Activated T-helper 1 cell treated with anti-CD3 and anti-CD28 coated beads, Interleukin-12 subunit alpha, Interleukin-12 subunit beta, Interleukin-2, Interleukin-4 antibody, amounts not matched to agents 30 ng/mL and 10 ng/mL and 1 ng/mL, durations not matched to agents 14 hours and 24 hours and 36 hours (primary cell): ENCODE measurements at regions of chr3 and their contacts with region 1.

Region 1: GRCh38 chr3:12275974-12276650 is 12.8 kb upstream of the PPARG start:
- DNase-seq: no peak
- H3K4me3 Mint-ChIP-seq: no peak overlapping the region
- H3K27ac Mint-ChIP-seq: no peak overlapping the region
- H3K4me1 Mint-ChIP-seq: no peaks in the 10 kb centered on the region
- H3K27me3 Mint-ChIP-seq: peaks cover 28% of the 10 kb centered on the region

Region 2: GRCh38 chr3:12235691-12236090 is 40.4 kb before region 1 on chr3:
- intact Hi-C with region 1: loop called (anchors 5 kb)
- DNase-seq: no peak
- H3K4me3 Mint-ChIP-seq: no peak overlapping the region
- H3K27ac Mint-ChIP-seq: no peak overlapping the region
- H3K4me1 Mint-ChIP-seq: peaks cover 9% of the 10 kb centered on the region
- H3K27me3 Mint-ChIP-seq: peaks cover 9% of the 10 kb centered on the region

Region 3: DNA sequence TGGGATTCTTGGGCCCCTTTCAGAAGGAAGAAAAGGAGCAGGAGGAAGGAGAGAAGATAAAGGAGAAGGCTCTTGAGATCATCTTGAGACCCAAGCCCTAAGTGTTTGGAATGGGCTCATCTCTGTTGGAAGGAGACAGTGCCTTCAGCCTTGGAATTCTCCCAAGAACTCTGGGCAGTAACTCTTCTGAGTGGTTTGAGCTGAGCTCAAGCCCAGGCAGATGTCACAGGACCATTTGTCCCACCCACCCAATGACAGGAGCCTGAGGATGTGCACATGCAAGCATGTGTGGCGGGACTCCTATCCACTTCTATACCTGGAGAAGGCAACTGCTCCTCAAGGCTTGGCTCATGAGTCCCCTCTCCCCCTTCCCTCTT is 497.6 kb after region 1 on chr3:
- intact Hi-C with region 1: no loop called
- DNase-seq: no peak
- H3K4me3 Mint-ChIP-seq: no peak overlapping the region
- H3K27ac Mint-ChIP-seq: no peak overlapping the region
- H3K4me1 Mint-ChIP-seq: no peaks in the 10 kb centered on the region
- H3K27me3 Mint-ChIP-seq: peaks cover 10% of the 10 kb centered on the region